ENCODE measurements at regions of chr7 and their contacts with region 1.

Region 1: DNA sequence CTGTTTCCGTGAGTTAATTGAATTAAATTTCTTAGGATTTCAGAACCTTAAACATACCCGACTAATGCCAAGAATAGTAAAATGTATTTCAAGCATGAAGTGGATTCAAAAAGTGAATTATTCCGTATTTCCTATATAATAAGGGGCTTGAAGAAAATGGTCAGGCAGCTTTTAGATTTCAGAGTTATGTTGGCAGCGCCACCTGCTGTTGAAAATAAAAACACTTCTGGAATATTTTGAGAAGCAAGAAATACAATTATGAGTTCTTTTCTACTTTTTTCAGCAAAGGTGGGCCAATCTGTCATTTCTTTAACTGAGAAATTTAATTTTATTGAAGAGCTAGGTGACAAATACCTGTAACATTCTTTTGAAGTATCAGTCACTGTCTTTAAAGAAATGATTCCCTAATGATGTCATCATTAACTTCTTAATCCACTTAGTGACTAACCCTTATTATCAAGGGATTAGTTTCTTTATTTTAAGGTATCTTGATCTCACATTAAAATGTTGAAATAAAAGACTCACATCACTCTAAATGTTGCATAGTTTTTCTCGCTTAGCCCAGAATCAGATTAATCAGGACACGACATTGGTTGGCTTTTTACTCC is 36.6 kb upstream of the AGR3 start:
- DNase-seq: peak in 2 of 10 donors; percentile 9 to 35
- H3K4me3 ChIP-seq: no peak overlapping the region
- H3K27ac ChIP-seq: no peak overlapping the region
- H3K27me3 ChIP-seq: no peaks in the 10 kb centered on the region
- CTCF ChIP-seq: peak; percentile 65 to 94 (median 85)

Region 2: GRCh38 chr7:16083931-16084330 is 834.5 kb before region 1 on chr7:
- intact Hi-C with region 1: loop called in 1 of 2 experiments (anchors 10 kb)
- DNase-seq: no peak
- H3K4me3 ChIP-seq: no peak overlapping the region
- H3K27ac ChIP-seq: no peak overlapping the region
- H3K27me3 ChIP-seq: no peaks in the 10 kb centered on the region
- CTCF ChIP-seq: no peak

Region 3: DNA sequence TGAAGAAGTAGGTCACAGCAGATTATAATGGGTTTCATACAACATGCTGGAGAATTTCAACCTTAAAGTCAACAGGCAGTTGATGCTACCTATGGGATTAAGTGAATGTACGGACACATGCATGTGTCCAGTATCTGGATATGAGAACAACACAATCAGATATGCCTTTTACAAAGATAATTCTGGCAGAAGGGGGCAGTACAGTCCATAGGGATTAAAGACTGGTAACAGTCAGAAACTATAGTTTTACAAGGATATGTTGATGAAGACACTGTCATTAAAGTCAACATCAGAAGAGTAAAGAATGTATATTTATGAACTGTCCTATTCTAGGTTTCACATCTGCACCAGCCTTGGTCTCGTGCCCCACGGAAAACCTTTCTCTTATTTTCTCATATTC is 314.3 kb before region 1 on chr7:
- intact Hi-C with region 1: loop called (anchors 2 to 10 kb)
- DNase-seq: no peak
- H3K4me3 ChIP-seq: no peak overlapping the region
- H3K27ac ChIP-seq: peak overlapping the region in 7 of 59 donors; percentile 3 to 46 (median 37)
- H3K27me3 ChIP-seq: no peaks in the 10 kb centered on the region
- CTCF ChIP-seq: peak in 46 of 56 donors; percentile 17 to 72 (median 44)

Region 4: DNA sequence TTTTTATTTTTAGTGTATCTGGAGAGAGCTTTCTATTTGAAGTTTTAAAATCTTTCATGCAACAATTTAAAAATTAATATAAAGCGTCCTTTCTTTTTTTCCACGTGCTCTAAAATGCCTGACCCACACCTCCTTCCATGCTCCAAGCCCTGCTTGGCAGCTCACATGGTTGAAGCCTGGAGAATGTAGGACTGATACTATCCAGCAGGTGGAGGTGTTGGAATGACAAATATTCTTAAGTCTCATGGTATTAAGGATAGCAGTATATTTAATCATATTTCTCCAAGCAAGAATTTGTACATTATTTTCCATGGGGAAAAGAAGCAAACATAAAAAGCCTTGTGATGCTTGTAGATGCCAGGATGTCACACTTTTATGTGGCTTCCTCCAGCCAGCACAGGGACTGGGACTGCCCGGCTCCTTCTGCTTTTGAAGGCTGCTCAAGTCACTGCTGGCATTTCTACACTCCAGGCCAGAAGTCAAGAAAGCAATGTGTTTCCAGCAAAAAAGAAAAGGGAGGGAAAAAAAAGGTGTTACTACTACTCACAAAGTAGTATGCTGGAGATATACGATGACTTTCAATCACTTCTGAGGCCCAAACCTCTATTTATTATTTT is 222.7 kb before region 1 on chr7:
- intact Hi-C with region 1: loop called in 1 of 2 experiments (anchors 2 kb)
- DNase-seq: no peak
- H3K4me3 ChIP-seq: no peak overlapping the region
- H3K27ac ChIP-seq: peak overlapping the region in 19 of 59 donors; percentile 4 to 83 (median 28)
- H3K27me3 ChIP-seq: no peaks in the 10 kb centered on the region
- CTCF ChIP-seq: peak in 55 of 56 donors; percentile 24 to 63 (median 50)

Region 5: GRCh38 chr7:16801111-16801542 is 117.3 kb before region 1 on chr7:
- intact Hi-C with region 1: loop called in 1 of 2 experiments (anchors 5 kb)
- DNase-seq: no peak
- H3K4me3 ChIP-seq: no peak overlapping the region
- H3K27ac ChIP-seq: no peak overlapping the region
- H3K27me3 ChIP-seq: no peaks in the 10 kb centered on the region
- CTCF ChIP-seq: peak in 54 of 56 donors; percentile 16 to 70 (median 45)

Region 6: GRCh38 chr7:16982640-16983350 is 64.4 kb after region 1 on chr7:
- intact Hi-C with region 1: no loop called
- DNase-seq: peak in 1 of 10 donors; percentile 23
- H3K4me3 ChIP-seq: peak overlapping the region in 7 of 59 donors; percentile 1 to 25 (median 6)
- H3K27ac ChIP-seq: peak overlapping the region in 29 of 59 donors; percentile 1 to 80 (median 42)
- H3K27me3 ChIP-seq: peaks cover 0 to 6% (median 0%) of the 10 kb centered on the region in 45 donors
- CTCF ChIP-seq: peak; percentile 79 to 99 (median 93)

Measured in dorsolateral prefrontal cortex (tissue), 120 donors.